ENCODE measurements at regions of chr15 and their contacts with region 1.

Region 1: DNA sequence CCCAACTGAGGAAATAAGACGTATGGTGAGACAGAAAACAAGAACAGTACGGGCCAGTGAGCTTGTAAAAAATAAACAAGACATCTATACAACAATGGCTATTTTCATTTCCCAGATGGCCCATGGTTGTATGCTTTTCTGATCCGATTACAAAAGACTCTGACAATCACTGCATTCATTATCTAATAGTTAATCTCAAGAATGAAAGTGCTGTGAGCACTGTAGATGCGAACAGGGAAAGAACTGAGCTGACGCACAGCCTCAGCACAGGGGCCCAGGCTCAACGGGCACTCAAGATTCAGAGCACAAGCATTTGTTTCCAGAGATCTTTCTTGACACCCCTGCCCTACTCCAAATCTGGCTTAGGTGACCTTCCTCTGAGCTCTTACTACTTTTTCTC is 6.9 kb downstream of the MTMR10 start:
- DNase-seq: no peak
- H3K4me3 Mint-ChIP-seq: no peak overlapping the region
- H3K27ac Mint-ChIP-seq: no peak overlapping the region
- H3K4me1 Mint-ChIP-seq: peaks cover 42% of the 10 kb centered on the region
- H3K27me3 Mint-ChIP-seq: no peaks in the 10 kb centered on the region

Region 2: DNA sequence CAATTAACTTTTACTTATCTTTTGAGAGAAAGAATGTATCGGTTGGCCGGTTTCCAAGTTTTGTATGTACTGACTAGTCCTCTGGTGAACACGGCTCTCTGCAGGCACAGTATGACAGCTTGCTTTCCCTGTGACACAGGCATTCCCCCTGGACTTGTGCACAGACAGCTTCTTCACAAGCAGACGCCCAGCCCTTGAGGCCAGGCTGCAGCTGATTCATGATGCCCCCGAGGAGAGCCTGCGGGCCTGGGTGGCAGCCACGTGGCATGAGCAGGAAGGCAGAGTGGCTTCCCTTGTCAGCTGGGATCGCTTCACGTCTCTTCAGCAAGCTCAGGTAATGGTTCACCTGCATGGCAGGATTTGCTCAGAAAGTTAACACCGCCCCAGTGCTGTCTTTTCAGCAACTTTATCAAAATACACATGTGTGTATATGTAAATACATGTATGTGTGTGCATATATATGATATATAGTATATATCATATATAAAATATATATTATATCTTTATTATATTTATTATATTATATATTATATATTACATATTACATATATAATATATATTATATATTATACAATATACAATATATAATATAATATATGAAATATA is 55.4 kb before region 1 on chr15:
- CTCF ChIA-PET with region 1: no interaction called
- POLR2A ChIA-PET with region 1: no interaction called
- DNase-seq: no peak
- H3K4me3 Mint-ChIP-seq: no peak overlapping the region
- H3K27ac Mint-ChIP-seq: no peak overlapping the region
- H3K4me1 Mint-ChIP-seq: peaks cover 10% of the 10 kb centered on the region
- H3K27me3 Mint-ChIP-seq: no peaks in the 10 kb centered on the region

Region 3: DNA sequence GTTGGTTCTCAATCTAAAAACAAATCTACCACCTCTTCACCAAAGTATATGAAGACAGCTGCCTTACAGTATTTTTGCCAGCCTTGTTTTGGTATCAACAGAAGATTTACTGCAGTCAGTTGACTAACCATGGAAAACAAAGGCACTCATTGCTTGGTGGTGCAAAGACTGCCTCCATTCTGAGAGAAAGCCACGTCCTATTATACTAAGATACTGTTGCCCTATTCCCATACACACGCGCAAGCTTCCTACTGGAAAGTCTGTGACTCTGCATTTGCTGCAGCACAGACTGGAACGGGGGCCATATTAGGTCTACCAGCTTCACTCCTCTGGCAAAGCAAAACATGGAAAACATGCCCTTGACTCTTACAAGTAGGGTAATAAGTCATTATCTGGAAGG is 11.2 kb before region 1 on chr15:
- CTCF ChIA-PET with region 1: interaction called, 11 read pairs
- POLR2A ChIA-PET with region 1: no interaction called
- DNase-seq: no peak
- H3K4me3 Mint-ChIP-seq: no peak overlapping the region
- H3K27ac Mint-ChIP-seq: no peak overlapping the region
- H3K4me1 Mint-ChIP-seq: peaks cover 31% of the 10 kb centered on the region
- H3K27me3 Mint-ChIP-seq: no peaks in the 10 kb centered on the region

Region 4: GRCh38 chr15:31024330-31024729 is 39.8 kb after region 1 on chr15:
- CTCF ChIA-PET with region 1: no interaction called
- POLR2A ChIA-PET with region 1: no interaction called
- DNase-seq: no peak
- H3K4me3 Mint-ChIP-seq: no peak overlapping the region
- H3K27ac Mint-ChIP-seq: no peak overlapping the region
- H3K4me1 Mint-ChIP-seq: peaks cover 3% of the 10 kb centered on the region
- H3K27me3 Mint-ChIP-seq: peaks cover 22% of the 10 kb centered on the region